Thyroid gland (tissue), 4 donors: ENCODE measurements at regions of chr16 and their contacts with region 1.

Region 1: GRCh38 chr16:23594186-23594585 is 1.9 kb downstream of the NDUFAB1 start:
- DNase-seq: no peak
- H3K4me3 ChIP-seq: no peak overlapping the region
- H3K27ac ChIP-seq: no peak overlapping the region
- H3K4me1 ChIP-seq: peaks cover 8 to 14% of the 10 kb centered on the region in 2 donors
- H3K27me3 ChIP-seq: no peaks in the 10 kb centered on the region
- CTCF ChIP-seq: no peak
- POLR2A ChIP-seq: no peak

Region 2: GRCh38 chr16:23556881-23557778 is 37.1 kb before region 1 on chr16 and contains the starts of genes EARS2 and UBFD1:
- intact Hi-C with region 1: loop called (anchors 5 kb)
- DNase-seq: peak; percentile 99
- H3K4me3 ChIP-seq: peak within 1 kb of the TSS; percentile 54 to 96 (median 94)
- H3K27ac ChIP-seq: peak within 1 kb of the TSS; percentile 14 to 89 (median 74)
- H3K4me1 ChIP-seq: peaks cover 15 to 17% of the 10 kb centered on the region in 2 donors
- H3K27me3 ChIP-seq: no peaks in the 10 kb centered on the region
- CTCF ChIP-seq: peak; percentile 73 to 98 (median 88)
- POLR2A ChIP-seq: peak in 1 of 2 donors; percentile 61
- total RNA-seq, gene EARS2: 30.9 to 54.4 (median 50.7) TPM
- total RNA-seq, gene UBFD1: 75.0 to 147 (median 127) TPM